WTC11 (cell line): ENCODE measurements at regions of chr11 and their contacts with region 1.

Region 1: GRCh38 chr11:58905721-58906477 is 33.4 kb upstream of the GLYATL1 start:
- DNase-seq: peak; percentile 85
- ATAC-seq: peak; percentile 80
- H3K4me3 Mint-ChIP-seq: peak overlapping the region; percentile 65
- H3K27ac Mint-ChIP-seq: no peak overlapping the region
- H3K4me1 Mint-ChIP-seq: peaks cover 31% of the 10 kb centered on the region
- H3K27me3 Mint-ChIP-seq: peaks cover 79% of the 10 kb centered on the region
- CTCF ChIP-seq: no peak; the same call in 1 of the 2 replicates

Region 2: DNA sequence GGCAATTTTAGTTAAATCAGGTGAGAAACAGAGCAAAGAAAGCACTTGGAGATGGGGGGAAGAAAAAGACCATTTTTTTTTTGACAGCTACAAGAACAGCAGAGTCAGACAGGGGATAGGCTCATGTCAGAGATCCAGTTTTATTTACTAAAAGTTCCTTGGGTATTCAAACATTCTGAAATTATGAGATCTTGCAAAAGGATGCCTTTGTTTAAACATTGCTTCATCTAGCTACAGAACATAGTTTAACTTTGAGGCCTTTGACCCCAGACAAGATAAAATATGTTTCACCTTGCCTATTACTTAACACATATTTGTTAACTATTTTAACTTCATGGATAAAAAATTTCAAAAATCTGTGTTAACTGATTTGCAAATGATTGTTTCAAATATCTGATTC is 39.8 kb after region 1 on chr11:
- CTCF ChIA-PET with region 1: no interaction called
- POLR2A ChIA-PET with region 1: no interaction called
- DNase-seq: no peak
- ATAC-seq: no peak
- H3K4me3 Mint-ChIP-seq: no peak overlapping the region
- H3K27ac Mint-ChIP-seq: no peak overlapping the region
- H3K4me1 Mint-ChIP-seq: no peaks in the 10 kb centered on the region
- H3K27me3 Mint-ChIP-seq: no peaks in the 10 kb centered on the region
- CTCF ChIP-seq: no peak

Region 3: DNA sequence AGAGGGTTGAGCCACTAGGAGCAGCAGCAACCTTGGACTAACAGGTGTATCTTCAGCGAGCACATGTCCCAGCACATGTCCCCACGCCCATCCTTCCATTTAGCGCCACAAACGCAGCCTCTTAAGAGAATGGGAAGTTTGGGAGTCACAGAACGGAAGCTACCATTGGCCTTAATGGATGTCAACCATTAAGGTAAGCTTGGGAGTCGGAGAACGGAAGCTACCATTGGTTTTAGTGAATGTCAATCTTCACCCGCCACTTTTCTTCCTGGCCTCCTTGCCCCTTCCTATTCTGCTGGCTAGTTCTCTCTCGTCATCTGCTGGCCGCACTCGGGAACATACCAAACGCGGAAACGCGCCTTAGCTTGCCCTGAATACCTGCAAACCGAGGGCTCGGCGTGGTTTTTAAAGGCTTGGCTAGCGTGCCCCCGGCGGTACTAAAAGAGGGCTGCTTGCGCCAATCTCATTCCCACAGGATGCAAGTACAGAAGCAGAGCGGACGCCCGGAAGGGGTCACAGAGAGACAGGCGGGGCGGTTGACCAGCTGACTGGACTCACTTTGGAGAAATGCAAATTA is 57.7 kb after region 1 on chr11:
- CTCF ChIA-PET with region 1: interaction called, 28 read pairs
- POLR2A ChIA-PET with region 1: interaction called, 3 read pairs
- DNase-seq: peak; percentile 74
- ATAC-seq: peak; percentile 94
- H3K4me3 Mint-ChIP-seq: peak overlapping the region; percentile 64
- H3K27ac Mint-ChIP-seq: peak overlapping the region; percentile 78; the same call in 1 of the 2 replicates
- H3K4me1 Mint-ChIP-seq: peaks cover 26% of the 10 kb centered on the region
- H3K27me3 Mint-ChIP-seq: peaks cover 65% of the 10 kb centered on the region
- CTCF ChIP-seq: no peak

Region 4: DNA sequence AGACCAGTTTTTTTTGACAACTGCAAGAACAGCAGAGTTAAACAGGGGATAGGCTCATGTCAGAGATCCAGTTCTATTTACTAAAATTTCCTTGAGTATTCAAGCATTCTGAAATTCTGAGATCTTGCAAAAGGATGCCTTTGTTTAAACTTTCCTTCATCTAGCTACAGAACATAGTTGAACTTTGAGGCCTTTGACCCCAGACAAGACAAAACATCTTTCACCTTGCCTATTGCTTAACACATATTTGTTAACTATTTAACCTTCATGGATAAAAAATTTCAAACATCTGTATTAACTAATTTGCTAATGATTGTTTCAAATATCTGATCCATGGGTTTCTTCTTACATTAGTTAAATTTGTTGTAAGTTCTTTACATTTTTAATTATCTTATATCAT is 71.6 kb after region 1 on chr11:
- CTCF ChIA-PET with region 1: no interaction called
- POLR2A ChIA-PET with region 1: no interaction called
- DNase-seq: no peak
- ATAC-seq: no peak
- H3K4me3 Mint-ChIP-seq: no peak overlapping the region
- H3K27ac Mint-ChIP-seq: no peak overlapping the region
- H3K4me1 Mint-ChIP-seq: no peaks in the 10 kb centered on the region
- H3K27me3 Mint-ChIP-seq: peaks cover 8% of the 10 kb centered on the region
- CTCF ChIP-seq: no peak